ENCODE measurements at regions of chr3 and their contacts with region 1.

Region 1: GRCh38 chr3:190585805-190586630 is 72.1 kb downstream of the IL1RAP start:
- DNase-seq: peak; percentile 59
- H3K4me3 Mint-ChIP-seq: peak overlapping the region; percentile 73
- H3K27ac Mint-ChIP-seq: peak overlapping the region; percentile 95
- H3K4me1 Mint-ChIP-seq: peaks cover 78% of the 10 kb centered on the region
- H3K27me3 Mint-ChIP-seq: no peaks in the 10 kb centered on the region

Region 2: GRCh38 chr3:190513409-190514162 is 72.4 kb before region 1 on chr3 and contains the start of gene IL1RAP:
- intact Hi-C with region 1: loop called (anchors 1 kb)
- DNase-seq: peak; percentile 89
- H3K4me3 Mint-ChIP-seq: peak within 1 kb of the TSS; percentile 90
- H3K27ac Mint-ChIP-seq: peak within 1 kb of the TSS; percentile 97
- H3K4me1 Mint-ChIP-seq: peaks cover 39% of the 10 kb centered on the region
- H3K27me3 Mint-ChIP-seq: no peaks in the 10 kb centered on the region
- total RNA-seq, gene IL1RAP: 34.5 and 38.6 TPM in 2 replicates

Region 3: GRCh38 chr3:190601622-190602021 is 15.6 kb after region 1 on chr3:
- intact Hi-C with region 1: loop called (anchors 2 kb)
- DNase-seq: no peak
- H3K4me3 Mint-ChIP-seq: no peak overlapping the region
- H3K27ac Mint-ChIP-seq: no peak overlapping the region
- H3K4me1 Mint-ChIP-seq: peaks cover 35% of the 10 kb centered on the region
- H3K27me3 Mint-ChIP-seq: no peaks in the 10 kb centered on the region

Region 4: DNA sequence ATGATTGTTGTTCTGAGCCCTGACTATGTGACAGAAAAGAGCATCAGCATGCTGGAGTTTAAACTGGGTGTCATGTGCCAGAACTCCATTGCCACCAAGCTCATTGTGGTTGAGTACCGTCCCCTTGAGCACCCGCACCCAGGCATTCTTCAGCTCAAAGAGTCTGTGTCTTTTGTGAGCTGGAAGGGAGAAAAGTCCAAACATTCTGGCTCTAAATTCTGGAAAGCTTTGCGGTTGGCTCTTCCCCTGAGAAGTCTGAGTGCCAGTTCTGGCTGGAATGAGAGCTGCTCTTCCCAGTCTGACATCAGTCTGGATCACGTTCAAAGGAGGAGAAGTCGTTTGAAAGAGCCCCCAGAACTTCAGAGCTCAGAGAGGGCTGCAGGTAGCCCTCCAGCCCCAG is 69.9 kb after region 1 on chr3:
- intact Hi-C with region 1: no loop called
- DNase-seq: no peak
- H3K4me3 Mint-ChIP-seq: no peak overlapping the region
- H3K27ac Mint-ChIP-seq: no peak overlapping the region
- H3K4me1 Mint-ChIP-seq: no peaks in the 10 kb centered on the region
- H3K27me3 Mint-ChIP-seq: peaks cover 10% of the 10 kb centered on the region

Region 5: DNA sequence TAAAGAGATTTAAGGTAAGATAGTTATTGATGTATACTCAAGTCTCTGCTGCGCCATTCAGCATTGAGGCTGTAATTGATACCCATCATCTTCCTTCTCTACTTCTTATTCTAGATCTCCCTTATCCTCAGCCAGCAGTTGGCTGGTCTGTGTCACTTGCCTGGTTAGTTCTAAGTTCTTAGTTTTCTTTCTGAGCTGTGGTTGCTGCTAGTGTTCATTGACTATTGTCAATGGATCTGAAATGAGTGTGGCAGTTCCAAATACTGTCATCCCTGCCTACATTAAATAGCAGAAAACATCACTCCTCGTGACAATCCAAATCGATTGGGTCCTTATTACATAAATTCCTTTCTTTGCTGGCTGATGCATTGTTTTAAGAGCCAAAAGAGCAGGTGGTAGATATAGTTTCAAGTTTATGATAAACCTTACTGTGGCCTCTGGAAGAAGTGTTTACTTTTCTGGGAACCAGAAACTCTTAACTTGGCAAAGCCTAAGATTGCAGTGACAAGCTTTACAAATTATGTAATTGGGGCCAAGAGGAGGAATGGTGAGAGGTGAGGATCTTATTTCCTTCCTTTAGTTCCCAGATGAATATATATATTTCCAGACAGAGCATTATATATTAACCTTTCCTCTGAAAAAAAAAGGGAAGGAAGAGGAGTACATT is 108.5 kb after region 1 on chr3:
- intact Hi-C with region 1: loop called (anchors 5 kb)
- DNase-seq: no peak
- H3K4me3 Mint-ChIP-seq: no peak overlapping the region
- H3K27ac Mint-ChIP-seq: no peak overlapping the region
- H3K4me1 Mint-ChIP-seq: peaks cover 22% of the 10 kb centered on the region
- H3K27me3 Mint-ChIP-seq: peaks cover 8% of the 10 kb centered on the region

Measured in activated T-helper 2 cell treated with anti-CD3 and anti-CD28 coated beads, Interferon-gamma antibody, Interleukin-2, Interleukin-4, amounts not matched to agents 10 μg/mL and 5 μg/mL and 100 μg/mL, durations not matched to agents 14 hours and 24 hours and 36 hours (primary cell).